ENCODE measurements at regions of chr15 and their contacts with region 1.

Region 1: GRCh38 chr15:97248376-97248775 is 712.1 kb upstream of the ARRDC4 start:
- DNase-seq: no peak
- ATAC-seq: no peak
- H3K4me3 ChIP-seq: no peak overlapping the region
- H3K27ac ChIP-seq: no peak overlapping the region
- H3K4me1 ChIP-seq: no peaks in the 10 kb centered on the region
- H3K27me3 ChIP-seq: no peaks in the 10 kb centered on the region
- CTCF ChIP-seq: no peak

Region 2: GRCh38 chr15:97759363-97759762 is 511.0 kb after region 1 on chr15:
- CTCF ChIA-PET with region 1: no interaction called
- POLR2A ChIA-PET with region 1: no interaction called
- in situ Hi-C with region 1: no loop called
- intact Hi-C with region 1: loop called (anchors 5 kb)
- DNase-seq: no peak
- ATAC-seq: no peak
- H3K4me3 ChIP-seq: no peak overlapping the region
- H3K27ac ChIP-seq: no peak overlapping the region
- H3K4me1 ChIP-seq: no peaks in the 10 kb centered on the region
- H3K27me3 ChIP-seq: no peaks in the 10 kb centered on the region; the same call in 1 of the 2 replicates
- CTCF ChIP-seq: no peak

Measured in Panc1 (cell line).